HepG2 (cell line): ENCODE measurements at regions of chr1 and their contacts with region 1.

Region 1: DNA sequence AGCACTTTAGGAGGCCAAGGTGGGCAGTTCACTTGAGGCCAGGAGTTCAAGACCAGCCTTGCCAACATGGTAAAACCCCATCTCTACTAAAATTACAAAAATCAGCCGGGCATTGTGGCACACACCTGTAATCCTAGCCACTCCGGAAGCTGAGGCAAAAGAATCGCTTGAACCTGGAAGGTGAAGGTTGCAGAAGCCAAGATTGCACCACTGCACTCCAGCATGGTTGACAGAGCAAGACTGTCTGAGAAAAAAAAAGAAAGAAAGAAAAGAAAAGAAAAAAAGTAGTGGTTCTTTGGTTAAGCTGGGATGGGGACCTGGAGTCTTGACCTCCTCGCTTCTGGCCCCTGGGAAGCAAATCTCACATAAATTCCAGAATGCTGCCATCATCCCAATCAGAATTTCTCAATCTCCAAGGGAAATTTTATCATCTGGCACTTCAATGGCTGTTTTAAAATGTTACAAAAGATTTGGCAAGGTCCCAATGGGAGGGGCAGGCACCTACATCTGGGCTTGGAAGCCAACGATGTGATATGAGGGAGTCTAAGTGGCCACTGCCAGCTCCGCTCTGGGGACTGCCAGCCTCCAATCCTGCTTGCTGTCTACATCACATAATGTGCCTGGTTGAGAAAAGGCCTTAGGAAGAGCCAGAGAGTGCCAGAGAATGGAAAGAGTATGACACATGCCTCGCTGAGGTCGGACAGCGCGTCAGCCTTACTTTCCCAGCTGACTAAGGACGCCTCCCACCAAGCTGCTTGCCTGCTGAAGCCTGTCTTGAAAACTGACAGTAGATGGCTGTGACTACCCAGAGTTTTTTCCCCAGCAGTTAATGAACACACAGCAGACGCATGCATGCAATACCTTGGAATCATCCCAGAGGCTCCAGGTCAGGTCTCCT is 42.1 kb upstream of the SRP9 start:
- DNase-seq: peak; percentile 72
- ATAC-seq: peak; percentile 87
- H3K4me3 ChIP-seq: peak overlapping the region; percentile 6 to 53 (median 35); a peak in 3 of 6 replicates
- H3K27ac ChIP-seq: no peak overlapping the region
- H3K4me1 ChIP-seq: peaks cover 67% of the 10 kb centered on the region
- H3K27me3 ChIP-seq: peaks cover 0 to 5% of the 10 kb centered on the region in 2 experiments; a peak in 1 of 5 replicates
- CTCF ChIP-seq: peak; percentile 43
- EP300 ChIP-seq: no peak
- POLR2A ChIP-seq: no peak
- RAD21 ChIP-seq: no peak

Region 2: GRCh38 chr1:225746361-225747179 is 11.1 kb after region 1 on chr1:
- CTCF ChIA-PET with region 1: no interaction called
- POLR2A ChIA-PET with region 1: interaction called, 41 read pairs
- in situ Hi-C with region 1: no loop called
- intact Hi-C with region 1: no loop called
- DNase-seq: peak; percentile 85
- ATAC-seq: peak; percentile 98
- H3K4me3 ChIP-seq: peak overlapping the region; percentile 65 to 72 (median 66); a peak in 5 of 6 replicates
- H3K27ac ChIP-seq: peak overlapping the region; percentile 60
- H3K4me1 ChIP-seq: peaks cover 52% of the 10 kb centered on the region
- H3K27me3 ChIP-seq: no peaks in the 10 kb centered on the region
- CTCF ChIP-seq: peak; percentile 39; the same call in 1 of the 2 replicates
- EP300 ChIP-seq: no peak
- POLR2A ChIP-seq: peak in 1 of 2 experiments; percentile 60; a peak in 2 of 4 replicates
- RAD21 ChIP-seq: no peak

Region 3: GRCh38 chr1:226708342-226708780 is 972.9 kb after region 1 on chr1:
- CTCF ChIA-PET with region 1: no interaction called
- POLR2A ChIA-PET with region 1: no interaction called
- in situ Hi-C with region 1: no loop called
- intact Hi-C with region 1: no loop called
- DNase-seq: no peak
- ATAC-seq: no peak
- H3K4me3 ChIP-seq: no peak overlapping the region
- H3K27ac ChIP-seq: no peak overlapping the region
- H3K4me1 ChIP-seq: no peaks in the 10 kb centered on the region
- H3K27me3 ChIP-seq: peaks cover 3 to 27% of the 10 kb centered on the region in 2 experiments; a peak in 3 of 5 replicates
- CTCF ChIP-seq: no peak
- EP300 ChIP-seq: no peak
- POLR2A ChIP-seq: no peak
- RAD21 ChIP-seq: no peak